ENCODE measurements at regions of chr7 and their contacts with region 1.

Region 1: GRCh38 chr7:47482013-47482875 is 99.7 kb downstream of the TNS3 start:
- DNase-seq: peak; percentile 66 to 79
- ATAC-seq: peak; percentile 91 to 95
- H3K4me3 ChIP-seq: peak overlapping the region in 1 of 4 donors; percentile 40
- H3K27ac ChIP-seq: peak overlapping the region; percentile 84 to 90 (median 87)
- H3K4me1 ChIP-seq: peaks cover 32 to 40% of the 10 kb centered on the region in 2 donors
- H3K27me3 ChIP-seq: no peaks in the 10 kb centered on the region
- CTCF ChIP-seq: no peak
- POLR2A ChIP-seq: peak in 1 of 2 donors; percentile 56

Region 2: DNA sequence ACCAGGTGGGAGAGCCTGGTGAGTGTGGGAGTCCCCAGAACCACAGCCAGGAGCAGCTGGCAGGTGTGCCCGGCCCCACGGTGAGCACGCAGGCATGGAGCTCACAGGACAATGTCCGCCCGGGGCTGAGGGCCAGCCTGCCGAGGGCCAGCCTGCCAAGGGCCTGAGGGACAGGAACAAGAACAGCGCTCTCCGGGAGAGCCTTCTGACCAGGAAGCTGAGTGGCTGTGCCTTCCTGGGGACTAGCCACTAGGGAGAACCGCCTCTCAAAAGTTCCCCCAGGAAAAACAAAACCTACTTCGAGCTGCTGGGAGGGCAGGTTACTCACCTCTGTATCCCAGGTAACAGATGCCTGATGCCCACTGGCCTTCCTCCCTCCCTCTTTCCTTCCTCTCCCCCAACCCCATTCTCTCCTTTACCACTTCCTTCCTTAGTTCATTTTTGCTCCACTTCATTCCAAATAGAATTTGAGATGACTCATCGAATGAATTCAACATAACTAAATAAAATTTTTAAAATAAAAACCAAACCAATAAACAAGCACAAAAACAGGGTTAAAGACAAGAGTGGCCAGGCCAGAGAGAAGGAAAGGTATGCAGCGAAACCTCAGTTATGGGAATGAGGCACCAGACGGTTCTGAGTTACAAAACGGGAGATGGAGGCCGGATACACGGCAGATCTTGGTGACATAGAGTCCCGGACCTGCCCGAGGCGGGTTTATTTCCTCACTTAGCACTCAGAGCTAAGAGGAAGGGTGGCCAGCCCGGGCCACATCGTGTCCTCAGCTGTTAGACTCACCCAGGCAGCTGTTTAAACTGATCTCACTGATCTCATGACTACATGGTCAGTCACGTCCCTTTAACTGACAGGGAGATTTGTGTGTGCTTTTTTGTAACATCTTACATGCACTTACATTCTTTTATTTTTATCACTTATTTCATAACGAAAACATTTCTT is 28.9 kb before region 1 on chr7:
- in situ Hi-C with region 1: no loop called
- intact Hi-C with region 1: loop called (anchors 2 kb)
- DNase-seq: peak; percentile 91 to 94
- ATAC-seq: peak; percentile 74
- H3K4me3 ChIP-seq: peak overlapping the region; percentile 50 to 61 (median 56)
- H3K27ac ChIP-seq: peak overlapping the region; percentile 91 to 98 (median 94)
- H3K4me1 ChIP-seq: peaks cover 51 to 60% of the 10 kb centered on the region in 2 donors
- H3K27me3 ChIP-seq: no peaks in the 10 kb centered on the region
- CTCF ChIP-seq: peak in 1 of 5 experiments; percentile 13
- POLR2A ChIP-seq: peak; percentile 76 to 87

Region 3: DNA sequence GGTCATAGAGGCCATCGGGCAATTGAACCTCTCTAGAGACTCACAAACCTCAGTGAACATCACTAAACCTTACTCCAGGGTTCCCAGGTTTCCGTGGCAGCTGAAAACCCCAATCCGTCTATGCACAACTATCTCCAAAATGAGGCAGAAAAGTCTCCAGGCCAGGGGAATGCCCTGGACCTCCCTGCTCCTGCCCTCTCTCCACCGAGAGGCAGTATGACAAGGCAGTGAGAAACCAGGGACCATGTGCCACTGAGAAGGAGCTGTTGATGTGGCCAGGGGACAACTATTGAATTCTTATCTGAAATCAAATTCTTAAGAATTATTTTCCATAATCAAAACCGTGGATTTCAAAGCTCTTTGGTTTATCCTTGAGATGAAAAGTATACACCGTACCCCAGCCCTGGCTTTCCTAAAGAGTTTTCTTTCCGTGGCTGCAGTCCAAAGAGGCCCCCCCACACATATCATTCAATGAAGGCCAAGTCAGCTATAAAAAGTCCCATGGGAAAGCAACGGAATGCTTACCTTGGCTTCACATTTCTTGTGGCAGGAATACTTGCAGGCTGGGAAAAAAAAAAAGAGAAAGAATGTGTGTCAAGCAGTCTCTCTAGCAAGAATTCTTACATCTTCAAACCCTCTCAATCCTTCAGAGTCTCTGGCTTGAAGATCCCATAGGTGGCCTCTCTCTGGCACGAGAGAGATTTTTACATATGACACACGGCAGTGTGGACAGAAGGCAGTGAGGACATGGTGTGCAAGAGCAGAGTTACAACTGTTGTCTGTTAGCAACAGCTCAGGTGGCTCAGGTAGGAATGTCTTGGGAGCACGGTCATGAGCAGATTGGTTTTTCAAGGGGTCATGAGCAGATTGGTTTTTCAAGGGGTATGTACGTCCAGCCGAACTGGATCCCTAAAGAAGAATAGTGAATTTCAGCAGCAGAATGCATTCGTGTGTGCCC is 24.4 kb after region 1 on chr7:
- in situ Hi-C with region 1: no loop called
- intact Hi-C with region 1: loop called (anchors 1 kb)
- DNase-seq: no peak
- ATAC-seq: peak; percentile 15 to 18
- H3K4me3 ChIP-seq: no peak overlapping the region
- H3K27ac ChIP-seq: peak overlapping the region; percentile 57 to 68 (median 64)
- H3K4me1 ChIP-seq: peaks cover 22 to 27% of the 10 kb centered on the region in 2 donors
- H3K27me3 ChIP-seq: no peaks in the 10 kb centered on the region
- CTCF ChIP-seq: no peak
- POLR2A ChIP-seq: no peak

Region 4: DNA sequence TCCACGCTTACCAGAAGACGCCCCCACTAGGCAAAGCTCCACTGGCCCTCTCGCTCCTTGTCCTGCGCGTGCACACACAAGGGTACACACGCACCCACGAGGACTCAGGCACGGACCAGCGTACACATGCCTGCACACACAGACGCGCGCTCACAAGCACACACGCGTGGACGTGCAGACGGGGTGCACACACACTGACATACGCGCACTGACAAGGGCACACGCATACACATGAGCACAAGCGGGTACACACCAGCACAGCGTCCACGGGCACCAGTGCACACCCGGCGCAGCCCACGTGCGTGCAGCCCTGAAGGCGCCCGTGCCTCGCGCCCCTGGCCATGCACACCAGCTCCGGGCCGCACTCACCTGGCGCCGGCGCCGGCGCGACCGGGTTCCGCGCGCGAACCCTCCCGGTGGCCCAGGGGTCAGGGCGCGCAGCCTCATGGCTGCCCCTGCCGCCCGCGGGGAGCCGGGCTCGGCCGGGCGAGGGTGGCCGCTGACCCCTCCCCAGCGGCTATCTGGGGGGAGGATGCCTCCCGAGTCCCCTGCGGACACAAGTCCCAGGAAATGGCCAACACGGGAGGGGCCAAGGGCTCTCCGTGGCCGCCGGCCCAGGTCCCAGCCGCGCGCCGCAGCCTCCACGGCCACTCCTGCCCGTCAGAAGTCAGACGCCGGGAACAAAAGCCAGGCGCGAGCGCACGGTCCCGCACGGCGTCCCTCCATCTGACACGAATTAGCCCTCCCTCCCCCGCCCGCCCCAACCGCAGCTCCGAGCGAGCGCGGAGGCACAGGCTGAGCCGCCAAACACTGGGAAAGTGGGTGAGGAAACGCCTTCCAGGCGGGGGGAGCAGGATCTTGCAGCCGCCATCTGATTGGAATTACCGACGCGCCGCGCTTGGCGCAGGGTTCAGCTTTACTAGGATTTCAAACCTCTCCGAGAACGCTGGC is 54.7 kb after region 1 on chr7:
- in situ Hi-C with region 1: no loop called
- intact Hi-C with region 1: loop called (anchors 5 kb)
- DNase-seq: peak in 1 of 2 donors; percentile 43
- ATAC-seq: peak; percentile 27 to 60
- H3K4me3 ChIP-seq: peak overlapping the region; percentile 53 to 60 (median 56)
- H3K27ac ChIP-seq: peak overlapping the region in 2 of 4 donors; percentile 46 to 70
- H3K4me1 ChIP-seq: peaks cover 25 to 26% of the 10 kb centered on the region in 2 donors
- H3K27me3 ChIP-seq: no peaks in the 10 kb centered on the region
- CTCF ChIP-seq: no peak
- POLR2A ChIP-seq: no peak

Region 5: GRCh38 chr7:47568547-47568946 is 86.3 kb after region 1 on chr7:
- in situ Hi-C with region 1: no loop called
- intact Hi-C with region 1: no loop called
- DNase-seq: peak in 1 of 2 donors; percentile 40
- ATAC-seq: no peak
- H3K4me3 ChIP-seq: no peak overlapping the region
- H3K27ac ChIP-seq: no peak overlapping the region
- H3K4me1 ChIP-seq: peaks cover 16 to 17% of the 10 kb centered on the region in 2 donors
- H3K27me3 ChIP-seq: no peaks in the 10 kb centered on the region
- CTCF ChIP-seq: no peak
- POLR2A ChIP-seq: no peak

Region 6: DNA sequence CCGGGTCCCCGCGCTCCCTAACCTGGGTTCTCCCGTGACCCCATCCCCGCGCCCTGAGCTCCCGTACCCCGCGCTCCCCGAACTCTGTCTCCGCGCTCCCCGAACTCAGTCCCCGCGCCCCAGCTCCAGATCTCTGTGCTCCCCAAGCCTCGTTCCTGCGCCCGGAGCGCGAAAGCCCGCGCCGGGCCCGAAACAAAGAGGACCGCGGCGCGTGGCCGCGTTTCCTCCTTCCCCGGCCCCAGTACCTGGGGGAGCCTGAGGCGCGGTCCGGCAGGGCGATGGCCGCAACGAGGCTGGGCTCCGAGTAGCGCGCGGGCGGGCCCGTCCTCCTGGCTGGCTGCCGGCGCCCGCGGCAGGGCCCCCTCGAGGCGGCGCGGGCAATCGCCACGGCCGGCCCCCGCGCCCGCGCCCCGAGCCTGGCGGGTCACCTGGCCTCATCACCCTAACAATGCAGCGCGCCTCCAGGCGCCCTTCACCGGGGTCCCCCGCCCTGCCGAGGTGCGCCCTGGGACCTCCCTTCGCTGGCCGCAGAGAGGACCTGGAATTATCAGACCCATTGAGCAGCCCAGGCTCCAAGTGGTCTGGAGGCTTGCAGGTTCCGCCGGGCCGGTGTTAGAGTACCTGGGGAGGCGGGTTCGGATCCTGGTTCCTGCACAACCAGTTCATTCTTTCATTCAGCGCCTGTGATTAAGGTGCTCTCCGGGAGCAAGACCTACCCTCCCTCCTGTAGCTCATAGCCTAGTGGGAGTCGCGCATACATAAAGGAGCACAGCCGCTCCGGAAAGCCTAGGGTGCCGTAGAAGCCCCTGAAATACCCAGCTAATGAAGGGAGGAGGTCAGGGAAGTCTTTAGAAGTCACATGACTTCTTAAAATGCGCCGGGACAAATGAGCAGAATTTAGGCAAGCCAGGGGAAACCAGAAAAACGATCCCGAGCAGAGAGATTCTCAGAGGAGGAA is 99.8 kb after region 1 on chr7 and contains the start of gene TNS3:
- in situ Hi-C with region 1: no loop called
- intact Hi-C with region 1: loop called (anchors 5 kb)
- DNase-seq: no peak
- ATAC-seq: peak; percentile 37 to 50
- H3K4me3 ChIP-seq: peak within 1 kb of the TSS; percentile 70 to 84 (median 74)
- H3K27ac ChIP-seq: peak within 1 kb of the TSS; percentile 62 to 76 (median 70)
- H3K4me1 ChIP-seq: peaks cover 21 to 27% of the 10 kb centered on the region in 2 donors
- H3K27me3 ChIP-seq: peaks cover 0 to 3% (median 0%) of the 10 kb centered on the region in 3 donors
- CTCF ChIP-seq: peak in 4 of 5 experiments; percentile 6 to 41 (median 25)
- POLR2A ChIP-seq: peak in 1 of 2 donors; percentile 20
- total RNA-seq, gene TNS3: 39.4 to 64.3 (median 50.5) TPM